ENCODE measurements at regions of chr3 and their contacts with region 1.

Region 1: GRCh38 chr3:128794770-128795649 is 69.0 kb downstream of the RAB7A start:
- DNase-seq: peak; percentile 78
- ATAC-seq: peak; percentile 74
- H3K4me3 Mint-ChIP-seq: peak overlapping the region; percentile 48
- H3K27ac Mint-ChIP-seq: peak overlapping the region; percentile 90
- H3K4me1 Mint-ChIP-seq: peaks cover 87% of the 10 kb centered on the region
- H3K27me3 Mint-ChIP-seq: no peaks in the 10 kb centered on the region
- CTCF ChIP-seq: peak; percentile 85

Region 2: DNA sequence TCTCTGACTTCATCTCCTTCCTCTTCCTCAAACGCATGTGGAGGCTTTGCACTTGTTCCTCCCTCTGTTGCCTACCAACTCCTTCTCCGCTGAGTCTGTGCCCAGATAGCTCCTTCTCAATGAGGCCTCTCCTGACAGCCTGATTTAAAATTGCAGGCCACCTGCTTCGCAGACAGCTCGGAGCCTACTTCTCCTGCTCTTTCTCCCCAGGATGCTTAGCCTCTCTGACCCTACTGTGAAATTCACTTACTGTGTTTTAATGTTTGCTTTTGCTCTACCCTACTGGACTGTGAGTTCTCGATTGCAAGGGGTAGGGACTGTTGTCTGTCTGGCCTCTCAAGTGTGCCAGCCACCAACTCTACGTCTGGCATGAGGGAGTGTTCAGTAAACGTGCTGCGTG is 558.4 kb before region 1 on chr3:
- CTCF ChIA-PET with region 1: no interaction called
- POLR2A ChIA-PET with region 1: no interaction called
- intact Hi-C with region 1: no loop called
- DNase-seq: no peak
- ATAC-seq: no peak
- H3K4me3 Mint-ChIP-seq: no peak overlapping the region
- H3K27ac Mint-ChIP-seq: no peak overlapping the region
- H3K4me1 Mint-ChIP-seq: peaks cover 8% of the 10 kb centered on the region
- H3K27me3 Mint-ChIP-seq: no peaks in the 10 kb centered on the region
- CTCF ChIP-seq: no peak

Region 3: DNA sequence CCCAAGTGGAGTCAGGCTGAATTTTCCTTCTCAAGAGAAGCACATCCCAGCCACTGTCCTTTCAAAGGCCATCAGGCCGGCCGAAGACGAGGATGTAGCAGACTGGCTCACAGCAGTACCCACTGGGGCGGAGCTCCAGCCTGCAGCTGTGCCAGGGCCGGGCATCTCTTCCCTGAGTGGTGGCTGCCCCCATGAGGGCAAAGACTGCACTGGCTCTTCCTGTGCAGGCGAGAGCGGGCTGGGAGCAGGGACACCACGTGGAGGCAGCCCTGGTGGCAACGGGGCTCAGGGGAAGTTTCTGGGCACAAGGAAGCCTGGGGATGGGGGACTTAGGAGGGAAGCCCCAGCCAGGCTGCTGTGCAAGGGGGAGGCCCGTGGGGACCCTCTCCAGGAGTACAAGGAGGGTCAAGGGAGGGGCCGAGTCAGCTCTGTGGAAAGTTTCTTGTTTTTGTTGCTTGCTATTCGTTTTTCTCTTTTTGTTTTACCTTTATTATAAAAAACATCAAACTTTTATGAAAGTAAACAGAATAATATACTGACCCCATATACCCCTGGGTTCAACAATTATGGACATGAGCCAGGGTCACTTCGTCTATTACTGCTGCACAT is 210.5 kb before region 1 on chr3:
- CTCF ChIA-PET with region 1: no interaction called
- POLR2A ChIA-PET with region 1: no interaction called
- intact Hi-C with region 1: no loop called
- DNase-seq: peak; percentile 72
- ATAC-seq: peak; percentile 99
- H3K4me3 Mint-ChIP-seq: no peak overlapping the region
- H3K27ac Mint-ChIP-seq: no peak overlapping the region
- H3K4me1 Mint-ChIP-seq: no peaks in the 10 kb centered on the region
- H3K27me3 Mint-ChIP-seq: peaks cover 13% of the 10 kb centered on the region
- CTCF ChIP-seq: peak; percentile 73

Region 4: DNA sequence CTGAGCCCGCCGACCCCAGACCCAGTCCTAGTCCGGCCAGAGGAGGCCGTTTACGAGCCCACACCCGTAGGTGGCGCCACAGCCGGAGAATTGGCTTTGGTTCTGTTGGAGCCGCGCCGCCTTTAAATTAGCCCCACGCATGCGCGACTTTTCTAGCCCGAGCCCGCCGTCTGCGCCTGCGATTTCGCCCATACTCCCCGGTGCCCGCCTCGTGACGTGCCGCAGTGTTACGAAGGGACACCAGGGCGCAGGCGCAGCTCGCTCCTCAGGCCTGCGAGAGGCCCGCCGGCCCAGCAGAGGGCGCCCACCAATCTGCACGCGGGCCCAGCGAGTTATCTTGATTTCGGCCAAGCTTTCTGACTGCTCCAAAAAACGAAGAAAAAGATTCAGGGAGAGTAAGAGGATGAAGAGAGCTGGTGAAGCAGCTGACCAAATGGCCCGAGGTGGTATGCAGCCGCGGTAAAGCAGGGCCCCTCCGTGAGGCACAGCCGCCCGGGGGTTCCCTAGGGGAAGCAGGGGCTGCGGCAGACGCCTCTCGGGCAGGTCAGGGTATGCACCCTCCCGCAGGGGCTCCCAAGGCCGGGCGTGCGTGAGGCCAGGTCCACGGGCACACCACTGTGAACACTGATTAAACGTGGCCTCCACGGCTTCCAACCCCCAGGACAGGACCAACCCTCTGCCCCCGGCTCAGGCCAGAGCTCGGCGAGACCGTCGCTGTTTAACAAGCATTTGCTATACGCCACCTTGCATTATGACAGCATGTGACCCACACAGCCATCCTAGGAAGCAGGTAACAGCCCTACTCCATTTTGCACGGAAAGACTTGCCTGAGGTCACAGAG is 177.2 kb before region 1 on chr3:
- CTCF ChIA-PET with region 1: interaction called, 13 read pairs
- POLR2A ChIA-PET with region 1: no interaction called
- intact Hi-C with region 1: no loop called
- DNase-seq: peak; percentile 99
- ATAC-seq: peak; percentile 90
- H3K4me3 Mint-ChIP-seq: peak overlapping the region; percentile 95
- H3K27ac Mint-ChIP-seq: peak overlapping the region; percentile 94
- H3K4me1 Mint-ChIP-seq: peaks cover 29% of the 10 kb centered on the region
- H3K27me3 Mint-ChIP-seq: no peaks in the 10 kb centered on the region
- CTCF ChIP-seq: peak; percentile 92

Region 5: GRCh38 chr3:128734523-128735189 is 60.4 kb before region 1 on chr3:
- CTCF ChIA-PET with region 1: interaction called, 13 read pairs
- POLR2A ChIA-PET with region 1: interaction called, 3 read pairs
- intact Hi-C with region 1: loop called (anchors 5 kb)
- DNase-seq: no peak
- ATAC-seq: peak; percentile 10
- H3K4me3 Mint-ChIP-seq: no peak overlapping the region
- H3K27ac Mint-ChIP-seq: peak overlapping the region; percentile 13
- H3K4me1 Mint-ChIP-seq: peaks cover 73% of the 10 kb centered on the region
- H3K27me3 Mint-ChIP-seq: no peaks in the 10 kb centered on the region
- CTCF ChIP-seq: no peak

Region 6: DNA sequence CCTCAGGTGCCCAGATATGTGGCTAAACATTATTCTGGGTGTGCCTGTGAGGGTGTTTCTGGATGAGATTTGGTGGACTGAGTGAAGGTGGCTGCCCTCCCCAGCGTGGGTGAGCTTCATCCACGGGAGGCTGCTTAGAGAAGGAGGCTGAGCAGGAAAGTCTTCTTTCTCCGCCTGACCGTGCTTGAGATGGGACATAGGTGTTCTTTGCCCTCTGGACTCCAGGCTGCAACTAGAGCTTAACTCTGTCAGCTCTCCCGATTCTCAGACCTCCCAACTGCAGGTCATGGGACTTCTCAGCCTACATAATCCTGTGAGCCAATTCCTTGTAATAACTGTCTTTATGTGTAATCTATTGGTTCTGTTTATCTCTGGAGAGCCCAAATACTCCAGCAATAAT is 35.0 kb before region 1 on chr3:
- CTCF ChIA-PET with region 1: interaction called, 12 read pairs
- POLR2A ChIA-PET with region 1: no interaction called
- intact Hi-C with region 1: no loop called
- DNase-seq: no peak
- ATAC-seq: no peak
- H3K4me3 Mint-ChIP-seq: no peak overlapping the region
- H3K27ac Mint-ChIP-seq: peak overlapping the region; percentile 14
- H3K4me1 Mint-ChIP-seq: peaks cover 66% of the 10 kb centered on the region
- H3K27me3 Mint-ChIP-seq: no peaks in the 10 kb centered on the region
- CTCF ChIP-seq: no peak

Region 7: GRCh38 chr3:128780101-128780837 is 14.7 kb before region 1 on chr3:
- CTCF ChIA-PET with region 1: interaction called, 34 read pairs
- POLR2A ChIA-PET with region 1: interaction called, 5 read pairs
- intact Hi-C with region 1: no loop called
- DNase-seq: no peak
- ATAC-seq: no peak
- H3K4me3 Mint-ChIP-seq: no peak overlapping the region
- H3K27ac Mint-ChIP-seq: peak overlapping the region; percentile 39
- H3K4me1 Mint-ChIP-seq: peaks cover 86% of the 10 kb centered on the region
- H3K27me3 Mint-ChIP-seq: no peaks in the 10 kb centered on the region
- CTCF ChIP-seq: no peak

Measured in activated CD8-positive, alpha-beta T cell treated with anti-CD3 and anti-CD28 coated beads for 36 hours (primary cell).